MCF 10A (cell line): ENCODE measurements at regions of chr1 and their contacts with region 1.

Region 1: DNA sequence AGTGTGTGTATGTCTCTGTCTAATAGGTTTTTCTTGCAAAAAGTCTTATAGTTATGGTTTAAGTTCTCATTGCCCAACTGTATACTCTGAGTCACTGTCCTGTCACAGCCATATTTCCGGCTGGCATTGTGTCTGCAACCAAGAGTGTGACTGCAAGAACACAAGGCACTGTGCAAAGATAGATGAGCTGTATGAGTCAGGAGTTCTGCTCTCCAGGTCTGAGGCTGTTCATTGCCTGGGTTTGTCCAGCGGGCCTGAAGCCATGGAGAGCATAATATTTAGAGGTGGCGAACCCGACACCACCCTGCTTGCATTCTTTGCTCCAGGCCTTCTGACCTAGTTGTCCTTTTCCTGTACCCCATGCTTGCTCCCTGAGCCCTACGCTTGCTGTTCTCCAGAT is 50.9 kb upstream of the CNIH3 start:
- DNase-seq: peak; percentile 100
- H3K4me3 Mint-ChIP-seq: peak overlapping the region; percentile 7
- H3K27ac Mint-ChIP-seq: peak overlapping the region; percentile 53
- H3K4me1 Mint-ChIP-seq: peaks cover 30% of the 10 kb centered on the region
- H3K27me3 Mint-ChIP-seq: no peaks in the 10 kb centered on the region
- CTCF ChIP-seq: no peak

Region 2: GRCh38 chr1:224592636-224593582 is 27.7 kb after region 1 on chr1:
- CTCF ChIA-PET with region 1: interaction called, 6 read pairs
- POLR2A ChIA-PET with region 1: no interaction called
- intact Hi-C with region 1: loop called (anchors 2 kb)
- DNase-seq: peak; percentile 86
- H3K4me3 Mint-ChIP-seq: no peak overlapping the region
- H3K27ac Mint-ChIP-seq: no peak overlapping the region
- H3K4me1 Mint-ChIP-seq: peaks cover 15% of the 10 kb centered on the region
- H3K27me3 Mint-ChIP-seq: no peaks in the 10 kb centered on the region
- CTCF ChIP-seq: no peak

Region 3: DNA sequence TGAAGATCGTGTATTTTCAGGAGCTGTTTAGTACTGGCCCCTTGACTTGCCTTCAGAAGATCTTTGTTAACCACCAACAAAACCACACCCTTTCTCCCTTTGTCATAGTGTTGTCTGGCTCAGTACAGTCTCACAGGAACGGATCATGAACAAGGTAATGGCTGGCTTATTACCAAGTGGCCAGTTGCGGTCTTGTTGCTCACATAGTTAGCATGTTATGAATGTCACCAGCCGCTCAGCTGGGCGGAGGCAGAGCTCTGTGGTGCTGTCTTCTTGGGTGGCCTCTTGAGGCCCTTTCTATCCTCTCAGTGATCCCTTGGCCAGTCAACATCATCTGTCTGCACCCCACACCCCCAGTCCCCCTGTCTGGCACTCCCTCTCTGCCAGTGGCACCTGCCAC is 72.3 kb after region 1 on chr1:
- CTCF ChIA-PET with region 1: interaction called, 4 read pairs
- POLR2A ChIA-PET with region 1: interaction called, 3 read pairs
- intact Hi-C with region 1: loop called (anchors 1 kb)
- DNase-seq: peak; percentile 92
- H3K4me3 Mint-ChIP-seq: no peak overlapping the region
- H3K27ac Mint-ChIP-seq: no peak overlapping the region
- H3K4me1 Mint-ChIP-seq: peaks cover 30% of the 10 kb centered on the region
- H3K27me3 Mint-ChIP-seq: peaks cover 27% of the 10 kb centered on the region
- CTCF ChIP-seq: no peak